Ascending aorta (tissue), 2 donors: ENCODE measurements at regions of chr1 and their contacts with region 1.

Region 1: GRCh38 chr1:109282952-109283747 is at the start of gene PSRC1:
- DNase-seq: peak; percentile 84 to 97
- H3K4me3 ChIP-seq: peak within 1 kb of the TSS; percentile 66 to 84
- H3K27ac ChIP-seq: peak within 1 kb of the TSS; percentile 84 to 91
- H3K4me1 ChIP-seq: peaks cover 0 to 13% of the 10 kb centered on the region in 2 donors
- H3K27me3 ChIP-seq: no peaks in the 10 kb centered on the region
- CTCF ChIP-seq: peak; percentile 45 to 65 (median 64)
- total RNA-seq, gene PSRC1: 1.3 TPM

Region 2: DNA sequence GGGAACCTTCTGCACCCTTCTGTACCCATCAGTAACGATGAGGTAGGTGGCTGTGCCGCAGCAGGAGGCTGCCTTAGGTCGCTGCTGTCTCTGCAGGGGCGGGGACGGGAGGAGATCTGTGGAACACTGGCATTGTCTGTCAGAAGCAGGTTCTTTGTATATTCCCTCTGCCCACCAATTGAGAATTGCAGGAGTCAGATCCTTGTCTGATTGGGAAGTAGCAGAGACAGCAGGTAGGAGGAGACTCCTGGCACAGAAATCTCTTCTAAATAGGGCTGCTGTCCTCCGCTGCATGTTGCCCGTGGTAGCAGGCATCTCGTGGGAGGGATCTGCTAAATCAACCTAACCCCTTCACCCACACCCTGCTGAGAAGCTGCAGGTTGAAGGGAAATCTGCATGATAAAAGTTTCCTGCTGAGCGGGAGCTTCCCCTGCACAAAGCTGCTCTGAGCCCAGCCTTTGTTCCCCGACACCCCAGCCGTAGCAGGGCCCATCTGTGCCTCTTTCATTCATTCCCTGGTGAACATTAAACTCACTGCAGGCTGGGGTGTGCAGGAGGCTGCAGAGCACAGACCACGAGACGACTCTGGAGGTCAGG is 53.5 kb before region 1 on chr1:
- intact Hi-C with region 1: no loop called
- DNase-seq: no peak
- H3K4me3 ChIP-seq: no peak overlapping the region
- H3K27ac ChIP-seq: no peak overlapping the region
- H3K4me1 ChIP-seq: no peaks in the 10 kb centered on the region
- H3K27me3 ChIP-seq: no peaks in the 10 kb centered on the region
- CTCF ChIP-seq: no peak

Region 3: GRCh38 chr1:109341944-109342930 is 59.1 kb after region 1 on chr1:
- intact Hi-C with region 1: loop called (anchors 5 kb)
- DNase-seq: no peak
- H3K4me3 ChIP-seq: no peak overlapping the region
- H3K27ac ChIP-seq: peak overlapping the region in 1 of 2 donors; percentile 12
- H3K4me1 ChIP-seq: no peaks in the 10 kb centered on the region
- H3K27me3 ChIP-seq: no peaks in the 10 kb centered on the region
- CTCF ChIP-seq: no peak

Region 4: GRCh38 chr1:109483672-109484518 is 200.7 kb after region 1 on chr1 and contains the start of gene ATXN7L2:
- intact Hi-C with region 1: loop called (anchors 5 kb)
- DNase-seq: peak; percentile 72 to 95
- H3K4me3 ChIP-seq: peak within 1 kb of the TSS; percentile 79
- H3K27ac ChIP-seq: peak within 1 kb of the TSS; percentile 91 to 93
- H3K4me1 ChIP-seq: peaks cover 6 to 12% of the 10 kb centered on the region in 2 donors
- H3K27me3 ChIP-seq: no peaks in the 10 kb centered on the region
- CTCF ChIP-seq: no peak
- total RNA-seq, gene ATXN7L2: 5.9 TPM